CD8-positive, alpha-beta T cell (primary cell): ENCODE measurements at regions of chr14 and their contacts with region 1.

Region 1: GRCh38 chr14:24108336-24108874 is 6.2 kb upstream of the DCAF11 start:
- DNase-seq: no peak
- ATAC-seq: peak; percentile 25
- H3K4me3 ChIP-seq: no peak overlapping the region
- H3K4me3 Mint-ChIP-seq: no peak overlapping the region
- H3K27ac ChIP-seq: peak overlapping the region; percentile 44 to 80
- H3K27ac Mint-ChIP-seq: peak overlapping the region; percentile 95
- H3K4me1 ChIP-seq: peaks cover 16% of the 10 kb centered on the region
- H3K4me1 Mint-ChIP-seq: peaks cover 12% of the 10 kb centered on the region
- H3K27me3 ChIP-seq: no peaks in the 10 kb centered on the region
- H3K27me3 Mint-ChIP-seq: no peaks in the 10 kb centered on the region
- CTCF ChIP-seq: no peak

Region 2: GRCh38 chr14:24013654-24014514 is 94.5 kb before region 1 on chr14:
- CTCF ChIA-PET with region 1: interaction called, 5 read pairs
- POLR2A ChIA-PET with region 1: no interaction called
- intact Hi-C with region 1: loop called (anchors 1 kb)
- DNase-seq: peak in 8 of 9 experiments; percentile 14 to 84 (median 50)
- ATAC-seq: peak; percentile 99
- H3K4me3 ChIP-seq: no peak overlapping the region
- H3K4me3 Mint-ChIP-seq: no peak overlapping the region
- H3K27ac ChIP-seq: no peak overlapping the region
- H3K27ac Mint-ChIP-seq: no peak overlapping the region
- H3K4me1 ChIP-seq: peaks cover 7% of the 10 kb centered on the region
- H3K4me1 Mint-ChIP-seq: peaks cover 25% of the 10 kb centered on the region
- H3K27me3 ChIP-seq: no peaks in the 10 kb centered on the region
- H3K27me3 Mint-ChIP-seq: no peaks in the 10 kb centered on the region
- CTCF ChIP-seq: peak; percentile 93

Region 3: GRCh38 chr14:24086193-24086955 is 22.0 kb before region 1 on chr14:
- CTCF ChIA-PET with region 1: interaction called, 217 read pairs
- POLR2A ChIA-PET with region 1: interaction called, 30 read pairs
- intact Hi-C with region 1: loop called in 1 of 2 experiments (anchors 1 kb)
- DNase-seq: no peak
- ATAC-seq: no peak
- H3K4me3 ChIP-seq: no peak overlapping the region
- H3K4me3 Mint-ChIP-seq: no peak overlapping the region
- H3K27ac ChIP-seq: no peak overlapping the region
- H3K27ac Mint-ChIP-seq: no peak overlapping the region
- H3K4me1 ChIP-seq: peaks cover 10% of the 10 kb centered on the region
- H3K4me1 Mint-ChIP-seq: peaks cover 17% of the 10 kb centered on the region
- H3K27me3 ChIP-seq: no peaks in the 10 kb centered on the region
- H3K27me3 Mint-ChIP-seq: no peaks in the 10 kb centered on the region
- CTCF ChIP-seq: no peak

Region 4: DNA sequence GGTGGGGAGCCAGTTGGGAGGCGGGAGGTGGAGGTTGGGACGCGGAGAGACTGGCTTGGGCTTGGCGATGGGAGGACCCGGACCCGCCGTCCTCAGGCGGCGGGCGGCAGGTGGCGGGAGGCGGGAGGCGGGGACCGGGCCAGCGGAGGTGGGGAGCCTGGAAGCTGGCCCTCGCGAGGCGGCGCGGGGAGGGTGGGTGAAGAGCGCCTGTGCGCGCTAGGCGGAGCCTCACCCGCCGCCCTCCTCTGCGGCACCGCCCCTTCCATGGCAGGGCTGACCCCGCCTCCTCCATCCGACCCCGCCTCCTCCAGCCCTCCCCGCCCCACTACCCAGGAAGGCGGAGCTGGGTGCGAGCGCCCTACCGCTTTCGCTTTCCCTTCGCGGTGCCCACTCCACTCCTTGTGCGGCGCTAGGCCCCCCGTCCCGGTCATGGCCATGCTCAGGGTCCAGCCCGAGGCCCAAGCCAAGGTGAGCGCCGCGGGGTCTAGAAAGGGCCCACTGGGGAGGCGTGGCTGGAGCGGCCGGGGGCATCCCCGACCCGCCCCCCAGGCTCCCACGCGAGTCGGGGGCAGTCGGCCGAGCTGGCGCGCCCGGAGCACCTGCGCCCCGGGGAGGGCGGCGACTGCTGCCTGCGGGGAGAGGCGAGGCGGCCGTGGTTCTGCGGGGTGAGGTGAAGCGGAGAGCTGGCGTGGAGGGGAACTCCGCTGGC is 27.6 kb after region 1 on chr14 and contains the start of gene PSME1:
- CTCF ChIA-PET with region 1: interaction called, 29 read pairs
- POLR2A ChIA-PET with region 1: interaction called, 16 read pairs
- intact Hi-C with region 1: no loop called
- DNase-seq: peak; percentile 89 to 97 (median 94)
- ATAC-seq: peak; percentile 98
- H3K4me3 ChIP-seq: peak within 1 kb of the TSS; percentile 78 to 91
- H3K4me3 Mint-ChIP-seq: peak within 1 kb of the TSS; percentile 90
- H3K27ac ChIP-seq: peak within 1 kb of the TSS; percentile 81 to 83
- H3K27ac Mint-ChIP-seq: peak within 1 kb of the TSS; percentile 93
- H3K4me1 ChIP-seq: peaks cover 54% of the 10 kb centered on the region
- H3K4me1 Mint-ChIP-seq: peaks cover 65% of the 10 kb centered on the region
- H3K27me3 ChIP-seq: no peaks in the 10 kb centered on the region
- H3K27me3 Mint-ChIP-seq: no peaks in the 10 kb centered on the region
- CTCF ChIP-seq: no peak
- total RNA-seq, gene PSME1: 200 to 207 TPM

Region 5: DNA sequence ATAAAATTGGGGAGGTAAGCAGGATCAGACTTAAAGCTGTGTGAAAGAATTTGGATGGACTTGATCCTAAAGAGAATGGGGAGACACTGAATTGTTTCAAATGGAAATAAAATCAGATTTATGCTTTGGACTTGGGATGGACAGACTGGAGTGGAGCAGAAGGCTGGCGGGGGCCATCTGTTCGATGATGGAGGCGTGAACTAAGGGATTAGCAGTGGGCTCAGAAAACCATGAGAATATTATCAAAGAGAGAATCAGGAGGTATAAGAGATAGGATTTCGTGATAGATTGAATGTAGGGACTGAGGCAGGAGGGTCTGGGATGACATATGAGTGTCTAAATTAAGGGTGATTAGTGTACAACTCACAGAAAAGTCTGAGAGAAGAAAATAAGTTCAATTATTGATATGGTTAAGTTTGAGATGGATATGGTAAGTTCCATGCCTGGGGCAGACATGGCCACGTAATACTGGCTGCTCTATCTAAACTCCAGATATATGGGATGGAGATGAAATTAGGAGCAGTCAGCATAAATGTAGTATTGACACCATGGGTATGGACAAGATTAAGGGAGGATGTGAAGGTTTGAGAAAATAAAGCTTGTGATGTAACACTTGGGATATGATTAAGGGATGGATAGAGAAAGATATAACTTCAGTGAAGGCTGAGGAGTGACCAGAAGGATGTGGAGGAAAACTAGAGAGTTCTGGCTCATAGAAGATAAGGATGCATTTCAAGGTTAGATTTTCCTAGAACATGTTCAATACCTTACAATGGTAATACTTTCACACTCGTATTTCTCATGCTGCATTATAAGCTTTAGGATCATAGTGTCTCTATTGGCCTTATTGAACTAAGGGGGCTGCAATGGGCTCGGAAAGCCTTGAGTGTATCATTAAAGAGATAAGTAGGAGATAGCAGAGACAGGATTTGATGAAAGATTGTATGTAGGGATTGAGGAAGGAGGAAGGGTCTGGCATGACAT is 96.0 kb after region 1 on chr14:
- CTCF ChIA-PET with region 1: no interaction called
- POLR2A ChIA-PET with region 1: no interaction called
- intact Hi-C with region 1: no loop called
- DNase-seq: no peak
- ATAC-seq: no peak
- H3K4me3 ChIP-seq: no peak overlapping the region
- H3K4me3 Mint-ChIP-seq: no peak overlapping the region
- H3K27ac ChIP-seq: no peak overlapping the region
- H3K27ac Mint-ChIP-seq: peak overlapping the region; percentile 12
- H3K4me1 ChIP-seq: no peaks in the 10 kb centered on the region
- H3K4me1 Mint-ChIP-seq: peaks cover 32% of the 10 kb centered on the region
- H3K27me3 ChIP-seq: no peaks in the 10 kb centered on the region
- H3K27me3 Mint-ChIP-seq: no peaks in the 10 kb centered on the region
- CTCF ChIP-seq: no peak